A549 (cell line): ENCODE measurements at regions of chr17 and their contacts with region 1.

Region 1: DNA sequence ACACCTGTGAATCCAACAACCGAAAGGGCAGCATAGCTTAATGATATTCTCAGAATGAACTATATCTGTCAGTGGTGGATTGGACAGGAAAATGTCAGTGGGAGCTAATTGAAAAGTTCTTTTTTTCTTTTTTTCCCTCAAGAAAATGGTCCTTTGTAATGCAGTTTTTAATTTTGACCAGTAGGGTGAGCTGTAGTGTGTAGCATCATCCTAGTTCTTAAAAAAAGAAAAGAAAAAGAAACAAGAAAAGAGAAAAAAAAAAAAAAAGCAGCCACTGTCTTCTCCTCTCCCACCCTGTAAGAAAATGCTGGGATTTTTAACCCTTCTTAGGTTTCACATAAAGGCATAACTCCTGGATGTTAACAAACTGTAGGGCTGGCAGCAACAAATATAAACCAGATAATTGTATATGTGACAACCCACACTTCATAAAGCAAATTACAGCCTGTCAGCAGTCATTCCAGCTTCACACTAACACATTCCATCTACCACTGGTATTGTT is 78.1 kb downstream of the SKAP1 start:
- DNase-seq: peak; percentile 48 to 52
- ATAC-seq: peak in 1 of 2 experiments; percentile 39; a peak in 1 of 6 replicates
- H3K4me3 ChIP-seq: no peak overlapping the region
- H3K27ac ChIP-seq: no peak overlapping the region
- H3K4me1 ChIP-seq: no peaks in the 10 kb centered on the region
- CTCF ChIP-seq: peak; percentile 87
- EP300 ChIP-seq: no peak
- POLR2A ChIP-seq: no peak
- RAD21 ChIP-seq: peak; percentile 68 to 70

Region 2: DNA sequence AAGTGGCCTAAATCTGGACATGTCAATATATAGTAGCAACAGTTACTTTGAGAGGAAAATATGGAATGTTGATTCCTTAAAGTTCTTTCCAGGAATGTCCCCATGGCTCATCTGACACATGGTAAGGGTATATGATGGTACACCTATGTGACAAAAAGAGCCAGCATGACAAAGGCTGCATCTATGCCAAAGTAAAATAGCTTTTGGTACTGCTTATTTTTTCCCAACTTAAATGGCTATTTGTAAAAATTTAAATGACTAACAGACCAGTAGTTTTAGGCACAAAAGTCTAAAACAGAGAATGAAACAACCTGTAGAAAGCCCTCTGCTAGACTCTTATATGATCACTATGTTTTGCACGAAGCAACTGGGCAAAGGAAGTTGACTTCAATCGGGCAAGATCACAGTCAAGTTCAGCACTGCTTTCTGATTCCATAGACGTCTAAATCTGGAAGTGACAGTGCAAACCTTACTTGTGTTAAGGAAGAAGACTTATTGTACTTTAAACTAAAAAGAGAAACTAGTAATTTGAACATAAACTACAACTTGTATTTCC is 57.0 kb before region 1 on chr17:
- CTCF ChIA-PET with region 1: no interaction called
- POLR2A ChIA-PET with region 1: no interaction called
- DNase-seq: peak in 1 of 2 experiments; percentile 14
- ATAC-seq: peak; percentile 13 to 44; a peak in 3 of 6 replicates
- H3K4me3 ChIP-seq: no peak overlapping the region
- H3K27ac ChIP-seq: peak overlapping the region; percentile 8 to 34; a peak in 5 of 6 replicates
- H3K4me1 ChIP-seq: peaks cover 30% of the 10 kb centered on the region
- CTCF ChIP-seq: no peak; the same call in 2 of the 3 replicates
- EP300 ChIP-seq: no peak
- POLR2A ChIP-seq: no peak
- RAD21 ChIP-seq: no peak

Region 3: DNA sequence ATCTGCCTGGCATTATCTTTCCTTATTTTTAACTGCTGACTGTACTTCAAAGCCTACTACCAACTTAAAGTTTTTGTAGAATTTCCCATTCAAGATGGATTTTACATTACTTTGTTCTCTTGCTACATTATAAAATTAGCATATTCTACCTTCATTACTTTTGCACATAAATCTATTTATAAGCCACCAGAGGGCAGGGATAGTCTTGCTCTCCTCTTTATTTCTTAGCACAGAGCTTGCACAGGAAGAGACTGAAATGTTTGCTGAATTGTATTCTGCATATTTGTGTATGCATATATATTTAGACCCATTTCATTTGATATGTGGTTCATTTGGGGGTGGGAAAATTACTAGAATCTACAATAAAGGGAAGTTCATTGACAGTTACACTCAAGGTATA is 29.8 kb before region 1 on chr17:
- CTCF ChIA-PET with region 1: interaction called, 10 read pairs
- POLR2A ChIA-PET with region 1: no interaction called
- DNase-seq: peak; percentile 15 to 30
- ATAC-seq: peak; percentile 44 to 54; a peak in 1 of 6 replicates
- H3K4me3 ChIP-seq: no peak overlapping the region
- H3K27ac ChIP-seq: no peak overlapping the region
- H3K4me1 ChIP-seq: no peaks in the 10 kb centered on the region
- CTCF ChIP-seq: 0 out of 3 replicates have a peak, but pooled peaks have one; percentile 19
- EP300 ChIP-seq: no peak
- POLR2A ChIP-seq: no peak
- RAD21 ChIP-seq: peak in 1 of 2 experiments; percentile 27; a peak in 2 of 5 replicates

Region 4: DNA sequence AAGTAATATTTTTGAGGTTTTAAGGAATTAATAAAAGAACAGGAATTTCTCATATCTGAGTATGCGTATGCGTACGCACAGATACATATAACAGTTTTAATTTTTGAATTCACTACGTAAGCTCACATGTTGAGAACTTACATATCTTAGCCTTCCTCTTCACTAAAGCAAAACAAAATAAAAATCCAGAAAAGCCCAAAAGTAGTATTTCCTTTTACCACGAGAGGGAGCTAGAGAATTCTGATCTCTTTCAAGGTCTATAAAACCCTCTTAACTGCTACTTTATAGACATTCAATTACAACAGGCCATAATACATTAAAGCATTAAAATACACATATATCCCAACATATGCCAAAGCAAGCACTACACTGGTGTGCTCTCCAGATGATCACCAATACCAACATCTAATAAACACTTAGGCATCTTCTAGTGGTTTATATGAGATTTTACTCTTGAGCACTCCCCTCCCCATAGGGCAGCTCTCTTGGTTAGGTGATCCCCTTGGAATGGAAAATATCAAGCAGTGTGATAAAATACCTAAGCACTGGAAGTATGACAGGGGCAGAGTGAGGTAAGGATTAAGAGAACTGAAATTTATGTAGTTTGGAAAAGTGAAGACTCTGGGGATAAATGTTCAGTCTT is 15.9 kb before region 1 on chr17:
- CTCF ChIA-PET with region 1: interaction called, 48 read pairs
- POLR2A ChIA-PET with region 1: no interaction called
- DNase-seq: peak; percentile 35 to 68
- ATAC-seq: peak; percentile 71 to 74; a peak in 5 of 6 replicates
- H3K4me3 ChIP-seq: no peak overlapping the region
- H3K27ac ChIP-seq: no peak overlapping the region
- H3K4me1 ChIP-seq: peaks cover 17% of the 10 kb centered on the region
- CTCF ChIP-seq: peak; percentile 94
- EP300 ChIP-seq: no peak
- POLR2A ChIP-seq: no peak
- RAD21 ChIP-seq: peak; percentile 75 to 79

Region 5: DNA sequence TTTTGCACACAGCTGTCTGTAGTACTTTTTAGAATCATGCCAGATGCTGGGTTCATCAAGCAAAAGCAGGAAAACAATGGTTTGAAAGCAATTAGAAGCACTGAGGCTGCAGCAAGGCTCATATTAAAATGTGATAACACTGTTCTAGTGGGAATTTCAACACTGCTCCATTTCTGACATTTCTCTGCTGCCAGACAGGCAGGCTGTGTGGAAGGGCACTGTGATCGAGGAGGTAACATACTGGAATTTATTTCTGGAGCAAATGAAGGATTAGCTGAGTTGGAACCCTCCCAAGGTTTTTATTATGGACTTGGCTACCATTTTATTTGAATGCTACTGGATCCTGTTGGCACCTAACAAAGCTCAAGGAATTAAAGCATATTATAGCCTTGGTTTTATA is 11.3 kb after region 1 on chr17:
- CTCF ChIA-PET with region 1: interaction called, 36 read pairs
- POLR2A ChIA-PET with region 1: no interaction called
- DNase-seq: no peak
- ATAC-seq: no peak
- H3K4me3 ChIP-seq: no peak overlapping the region
- H3K27ac ChIP-seq: no peak overlapping the region
- H3K4me1 ChIP-seq: no peaks in the 10 kb centered on the region
- CTCF ChIP-seq: no peak
- EP300 ChIP-seq: no peak
- POLR2A ChIP-seq: no peak
- RAD21 ChIP-seq: no peak

Region 6: DNA sequence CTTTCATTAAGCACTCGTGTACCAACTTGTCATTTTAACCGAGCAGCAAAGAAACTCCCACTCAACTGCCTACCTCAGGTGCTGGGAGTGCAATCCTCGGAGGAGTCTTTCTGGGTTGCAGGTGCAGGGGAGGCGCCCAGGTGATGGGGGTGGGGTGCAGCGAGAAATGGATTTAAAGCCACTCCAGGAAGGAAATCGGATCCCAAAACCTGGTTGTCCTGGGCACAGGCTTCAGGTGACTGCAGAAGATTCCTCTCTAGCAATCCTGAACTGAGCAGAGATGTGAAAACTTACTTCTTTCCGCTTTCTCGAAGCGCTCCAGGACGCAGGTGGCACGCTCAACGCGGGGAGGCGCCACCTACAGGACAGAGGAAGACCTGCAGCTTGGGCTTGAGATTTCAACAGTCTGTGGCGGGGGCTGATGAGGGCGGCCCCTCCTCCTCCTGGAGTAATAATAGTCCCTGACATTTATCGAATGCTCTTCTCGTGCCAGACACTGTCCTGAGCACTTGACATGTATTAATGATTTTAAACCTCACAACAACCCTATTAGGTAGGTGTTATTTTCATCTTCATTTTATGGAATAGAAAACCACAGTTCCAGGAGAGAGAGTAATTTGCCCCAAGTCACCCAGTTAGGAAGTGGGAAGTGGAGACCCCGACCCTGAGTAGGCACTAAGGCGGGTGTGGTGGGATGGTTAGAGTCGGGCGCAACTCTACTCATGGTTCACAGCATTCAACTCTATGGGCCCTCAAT is 105.4 kb after region 1 on chr17:
- CTCF ChIA-PET with region 1: interaction called, 16 read pairs
- POLR2A ChIA-PET with region 1: no interaction called
- DNase-seq: peak; percentile 69 to 75
- ATAC-seq: peak; percentile 84 to 97
- H3K4me3 ChIP-seq: peak overlapping the region; percentile 30; the same call in 2 of the 3 replicates
- H3K27ac ChIP-seq: no peak overlapping the region
- H3K4me1 ChIP-seq: peaks cover 8% of the 10 kb centered on the region; the same call in 2 of the 3 replicates
- CTCF ChIP-seq: peak; percentile 97
- EP300 ChIP-seq: no peak
- POLR2A ChIP-seq: no peak
- RAD21 ChIP-seq: peak; percentile 69 to 75

Region 7: GRCh38 chr17:48618256-48618897 is 266.5 kb after region 1 on chr17:
- CTCF ChIA-PET with region 1: interaction called, 16 read pairs
- POLR2A ChIA-PET with region 1: no interaction called
- DNase-seq: peak; percentile 86 to 97
- ATAC-seq: peak; percentile 74 to 78
- H3K4me3 ChIP-seq: no peak overlapping the region
- H3K27ac ChIP-seq: no peak overlapping the region
- H3K4me1 ChIP-seq: peaks cover 12% of the 10 kb centered on the region
- CTCF ChIP-seq: peak; percentile 99
- EP300 ChIP-seq: no peak
- POLR2A ChIP-seq: no peak
- RAD21 ChIP-seq: peak; percentile 97 to 99

Region 8: DNA sequence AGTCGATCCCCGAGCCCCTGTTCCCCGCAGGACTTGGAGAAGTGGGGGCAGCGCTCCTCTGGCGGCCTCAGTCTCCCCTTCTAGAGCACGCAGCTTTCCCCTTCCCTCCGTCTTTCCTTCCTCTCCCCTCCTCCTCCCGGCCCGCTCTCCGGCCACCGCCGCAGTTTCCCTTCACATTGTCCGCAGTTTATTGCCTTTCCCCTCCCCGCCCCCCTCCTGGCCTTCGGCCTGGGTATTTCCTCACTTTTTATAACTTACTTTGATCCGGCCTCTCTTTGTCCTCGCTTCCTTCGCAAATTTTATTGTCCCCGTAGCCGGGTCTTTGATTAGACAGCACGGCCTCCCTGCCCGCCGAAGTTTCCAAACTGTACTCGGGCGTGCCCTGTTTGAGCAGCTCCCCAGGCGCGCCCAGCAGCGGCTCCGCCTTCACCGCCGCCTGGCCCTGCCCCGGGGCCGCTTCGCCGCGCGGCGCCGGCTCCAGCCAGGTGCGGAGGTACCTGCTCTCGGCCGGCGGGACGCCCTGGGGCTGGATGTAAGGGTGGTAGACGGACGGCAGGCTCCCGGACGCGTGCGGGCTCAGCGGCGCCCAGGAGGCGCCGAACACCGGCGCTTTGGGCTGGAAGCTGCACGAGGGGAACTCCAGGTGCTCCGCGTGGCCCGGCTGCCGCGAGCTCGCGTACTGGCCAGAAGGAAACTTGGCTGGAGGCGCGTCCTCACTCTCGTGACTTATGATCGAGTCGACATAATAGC is 273.8 kb after region 1 on chr17:
- CTCF ChIA-PET with region 1: interaction called, 16 read pairs
- POLR2A ChIA-PET with region 1: no interaction called
- DNase-seq: peak; percentile 66 to 84
- ATAC-seq: peak; percentile 66 to 82
- H3K4me3 ChIP-seq: peak overlapping the region; percentile 72
- H3K27ac ChIP-seq: peak overlapping the region; percentile 89 to 95
- H3K4me1 ChIP-seq: peaks cover 15% of the 10 kb centered on the region; the same call in 2 of the 3 replicates
- CTCF ChIP-seq: no peak
- EP300 ChIP-seq: peak in 1 of 2 experiments; percentile 9; a peak in 1 of 5 replicates
- POLR2A ChIP-seq: peak; percentile 45
- RAD21 ChIP-seq: no peak